ENCODE measurements at regions of chr3 and their contacts with region 1.

Region 1: DNA sequence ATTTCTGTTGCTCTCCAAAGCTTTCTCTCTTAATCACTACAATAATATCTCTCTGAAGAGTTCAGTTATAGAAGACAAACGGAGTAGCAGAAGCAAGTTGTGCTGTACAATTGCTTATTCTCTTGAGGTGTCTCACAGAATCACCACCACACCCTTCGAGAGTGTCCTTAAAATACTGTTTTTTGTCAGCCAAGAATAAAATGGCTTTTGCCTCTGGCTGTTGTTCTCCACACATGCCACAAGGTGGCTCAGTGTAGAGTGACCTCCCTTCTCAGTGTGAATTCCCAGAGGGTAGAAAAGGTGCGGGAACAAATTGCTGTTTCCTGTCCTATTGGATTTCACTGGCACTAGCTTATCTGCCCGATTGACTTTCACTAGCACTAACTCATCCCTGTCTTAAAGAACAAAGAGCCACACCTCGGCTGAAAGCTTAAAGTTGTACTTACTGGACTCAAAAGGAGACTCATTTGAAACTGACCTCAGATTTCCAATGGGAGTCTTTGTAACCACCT is 134.2 kb upstream of the SATB1 start:
- DNase-seq: no peak
- H3K4me3 ChIP-seq: no peak overlapping the region
- H3K27ac ChIP-seq: no peak overlapping the region
- H3K4me1 ChIP-seq: peaks cover 0 to 15% (median 0%) of the 10 kb centered on the region in 6 donors
- H3K27me3 ChIP-seq: no peaks in the 10 kb centered on the region
- CTCF ChIP-seq: peak; percentile 45 to 82 (median 78)
- POLR2A ChIP-seq: no peak

Region 2: GRCh38 chr3:18758047-18758704 is 198.8 kb after region 1 on chr3:
- intact Hi-C with region 1: loop called (anchors 5 kb)
- DNase-seq: no peak
- H3K4me3 ChIP-seq: no peak overlapping the region
- H3K27ac ChIP-seq: no peak overlapping the region
- H3K4me1 ChIP-seq: peaks cover 0 to 11% (median 0%) of the 10 kb centered on the region in 6 donors
- H3K27me3 ChIP-seq: no peaks in the 10 kb centered on the region
- CTCF ChIP-seq: peak; percentile 37 to 79 (median 71)
- POLR2A ChIP-seq: no peak